ENCODE measurements at regions of chr14 and their contacts with region 1.

Region 1: DNA sequence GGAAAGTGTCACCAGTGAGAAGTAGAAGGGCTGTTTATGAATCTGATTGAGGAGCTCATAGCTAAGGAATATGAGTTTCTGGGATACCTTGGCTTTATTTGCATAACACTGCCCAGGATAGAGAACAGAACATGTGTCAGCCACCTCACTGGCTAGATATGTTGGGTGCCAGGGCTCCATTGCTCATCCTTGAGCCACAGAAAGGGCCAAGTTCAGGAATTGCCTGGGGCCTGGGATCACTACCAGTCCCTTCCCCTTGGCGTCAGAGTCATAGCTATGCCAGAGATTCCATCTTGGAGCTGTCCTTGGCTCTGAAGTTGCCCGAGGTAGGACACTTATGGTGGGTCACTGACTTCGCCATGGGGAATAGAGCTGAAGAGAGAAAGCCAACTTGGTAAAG is 49.0 kb downstream of the IFT43 start:
- DNase-seq: no peak
- H3K4me3 ChIP-seq: no peak overlapping the region
- H3K27ac ChIP-seq: no peak overlapping the region
- H3K4me1 ChIP-seq: no peaks in the 10 kb centered on the region
- H3K27me3 ChIP-seq: no peaks in the 10 kb centered on the region
- CTCF ChIP-seq: no peak

Region 2: DNA sequence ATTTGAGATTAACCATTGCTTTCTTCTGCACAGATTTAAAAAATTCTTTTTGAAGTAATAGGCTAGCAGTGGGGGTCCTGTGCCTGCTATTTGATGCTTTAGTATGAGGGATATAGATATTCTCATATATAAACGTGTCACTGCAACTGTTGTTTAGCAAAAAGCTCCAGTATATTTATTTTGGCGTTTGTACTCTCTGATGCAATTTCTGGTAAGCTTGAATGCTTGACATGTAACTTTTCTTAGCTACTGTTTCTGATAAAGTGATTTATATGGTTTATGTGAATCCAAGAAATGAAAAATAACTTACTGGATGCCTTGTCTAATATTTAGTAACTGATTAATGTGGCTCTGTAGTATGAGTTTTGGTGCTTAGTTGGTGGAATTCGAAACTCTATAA is 296.4 kb before region 1 on chr14:
- CTCF ChIA-PET with region 1: no interaction called
- POLR2A ChIA-PET with region 1: interaction called, 13 read pairs
- intact Hi-C with region 1: no loop called
- DNase-seq: no peak
- H3K4me3 ChIP-seq: no peak overlapping the region
- H3K27ac ChIP-seq: no peak overlapping the region
- H3K4me1 ChIP-seq: no peaks in the 10 kb centered on the region
- H3K27me3 ChIP-seq: no peaks in the 10 kb centered on the region
- CTCF ChIP-seq: no peak